Right ventricle myocardium superior (tissue), 1 donor: ENCODE measurements at regions of chr19 and their contacts with region 1.

Region 1: DNA sequence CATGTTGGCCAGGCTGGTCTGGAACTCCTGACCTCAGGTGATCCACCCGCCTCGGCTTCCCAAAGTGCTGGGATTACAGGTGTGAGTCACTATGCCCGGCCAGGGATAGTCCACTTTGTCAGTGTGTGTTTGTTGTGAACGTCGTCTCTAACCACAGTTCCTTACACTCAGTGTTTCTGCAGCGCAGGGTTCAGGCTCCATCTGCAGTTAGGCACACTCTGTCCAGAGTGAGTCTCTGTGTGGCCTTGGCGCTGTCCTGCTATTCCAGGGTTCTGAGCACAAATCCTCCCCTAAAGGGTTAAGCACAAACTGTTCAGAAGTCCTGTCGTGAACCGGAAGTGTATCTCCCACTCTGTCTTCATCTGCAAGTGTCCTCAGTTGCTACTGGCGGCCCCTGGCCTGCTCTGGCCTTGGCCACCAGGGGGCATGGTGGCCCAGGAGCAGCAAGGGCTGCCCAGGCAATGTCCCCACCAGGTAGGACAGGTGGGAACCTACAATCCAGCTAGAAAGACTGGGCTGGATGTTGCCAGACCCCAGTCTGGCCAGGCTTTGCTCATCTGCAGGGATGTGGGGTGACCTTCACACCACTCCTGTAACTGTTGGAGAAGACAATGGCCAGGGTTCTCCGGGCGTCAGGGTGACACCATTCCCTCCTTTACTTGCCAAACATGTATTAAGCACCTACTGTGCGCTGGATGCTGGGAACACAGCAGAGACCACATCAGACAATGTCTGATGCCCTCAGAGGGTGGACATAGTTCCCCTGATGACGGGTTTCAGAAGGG is 38.7 kb upstream of the GATAD2A start:
- DNase-seq: peak; percentile 78
- ATAC-seq: peak; percentile 89

Region 2: DNA sequence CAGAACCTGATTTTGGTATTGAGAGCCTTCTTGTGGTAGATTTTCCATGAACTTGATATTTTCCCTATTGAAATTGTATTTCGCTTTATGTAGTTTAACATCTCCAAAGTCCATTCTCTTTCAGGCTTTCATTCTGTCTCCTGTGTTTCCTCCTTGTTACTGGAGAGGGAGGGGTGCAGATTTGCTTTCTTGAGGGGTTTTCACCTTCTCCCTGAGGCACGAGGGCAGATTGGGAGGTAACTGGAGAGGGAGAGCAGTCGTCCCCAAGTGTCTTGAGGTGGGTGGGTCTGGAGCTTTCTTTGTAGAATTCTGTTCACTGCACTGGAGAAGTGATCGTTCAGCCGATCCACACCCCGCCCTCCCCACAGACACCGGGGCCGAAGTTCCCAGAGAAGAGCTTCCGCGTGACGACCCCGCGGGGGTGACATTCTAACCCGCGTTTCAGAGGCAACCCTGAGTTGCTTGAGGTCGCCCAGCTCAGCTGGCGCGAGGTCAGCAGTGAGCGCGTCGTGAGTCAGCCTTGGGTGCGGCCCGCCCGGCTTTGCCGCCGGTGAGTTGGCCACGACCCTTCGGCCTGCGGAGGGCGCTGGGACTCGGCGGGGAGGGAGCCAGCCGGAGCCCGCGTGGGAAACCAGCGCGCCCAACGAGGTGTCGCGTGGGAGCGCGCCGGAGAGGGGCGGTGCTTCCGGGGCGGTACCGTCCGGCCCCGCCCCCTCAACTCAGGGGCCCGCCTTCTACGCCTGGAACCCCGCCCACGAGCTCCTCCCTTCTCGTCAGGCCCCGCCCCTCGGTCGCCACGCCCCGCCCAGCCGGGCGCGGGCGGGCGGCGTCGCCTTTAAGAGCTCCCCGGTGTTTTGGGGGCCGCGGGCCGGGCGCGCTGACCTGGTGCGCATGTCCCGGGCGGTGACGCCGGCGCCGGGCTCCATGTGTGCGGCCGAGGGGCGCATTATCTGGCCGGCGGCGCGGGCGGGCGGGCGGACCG is 38.4 kb after region 1 on chr19 and contains the start of gene GATAD2A:
- intact Hi-C with region 1: no loop called
- DNase-seq: peak; percentile 96
- ATAC-seq: peak; percentile 97
- total RNA-seq, gene GATAD2A: 24.3 TPM

Region 3: DNA sequence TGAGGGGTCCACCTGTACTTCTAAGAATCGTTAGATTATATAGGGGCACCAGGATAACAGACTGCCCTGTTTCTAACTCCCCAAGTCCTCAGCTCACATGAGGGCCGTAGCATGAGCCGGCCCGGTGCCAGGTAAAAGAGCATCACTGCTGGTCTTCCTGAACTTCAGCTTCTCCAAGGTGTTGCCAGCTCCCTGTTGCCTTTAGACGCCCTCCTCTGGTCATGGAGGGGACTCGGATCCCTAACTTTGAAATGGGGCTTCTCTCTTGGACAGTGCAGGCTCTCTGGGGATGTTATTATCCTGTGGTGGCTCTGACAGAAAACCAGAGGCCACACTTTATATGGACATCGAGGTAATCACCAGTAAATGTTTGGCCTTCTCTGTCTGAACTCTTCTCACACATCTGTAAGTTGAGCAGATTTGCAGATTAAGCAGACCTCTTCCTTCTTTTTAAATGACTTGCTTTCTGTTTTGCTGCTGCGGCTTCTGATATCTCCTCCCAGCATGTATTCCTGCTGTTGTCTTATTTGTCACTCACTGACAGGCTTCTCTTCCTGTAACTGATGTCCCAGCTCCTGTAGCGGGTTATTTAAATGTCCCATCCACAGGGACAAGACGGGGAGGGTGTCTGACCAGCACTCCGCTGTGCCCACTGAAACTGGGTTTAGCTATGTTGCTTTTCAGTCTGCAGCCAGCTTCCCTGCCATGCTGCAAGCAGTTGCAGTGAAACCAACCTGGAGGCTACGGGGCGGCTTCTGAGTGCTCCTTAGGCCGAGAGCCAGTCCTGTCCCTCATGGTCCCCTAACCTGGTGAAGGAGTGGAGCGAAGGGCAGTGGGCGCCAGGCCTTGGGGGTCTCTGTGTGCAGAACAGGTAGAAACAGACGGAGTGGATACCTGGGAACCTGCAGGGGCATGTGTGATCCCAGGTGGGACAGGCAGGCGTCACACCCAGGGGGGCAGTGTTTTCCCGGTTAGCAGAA is 109.3 kb after region 1 on chr19:
- intact Hi-C with region 1: no loop called
- DNase-seq: no peak
- ATAC-seq: peak; percentile 24

Region 4: GRCh38 chr19:19488875-19489690 is 122.3 kb after region 1 on chr19:
- intact Hi-C with region 1: loop called (anchors 2 kb)
- DNase-seq: peak; percentile 84
- ATAC-seq: peak; percentile 66